CD8-positive, alpha-beta memory T cell (primary cell): ENCODE measurements at regions of chr17 and their contacts with region 1.

Region 1: GRCh38 chr17:56833809-56834379 is at the starts of genes C17orf67 and DGKE:
- DNase-seq: peak; percentile 98 to 100 (median 98)
- H3K4me3 ChIP-seq: peak within 1 kb of the TSS; percentile 84
- H3K4me3 Mint-ChIP-seq: peak within 1 kb of the TSS; percentile 95 to 100 (median 96)
- H3K27ac ChIP-seq: peak within 1 kb of the TSS; percentile 80
- H3K27ac Mint-ChIP-seq: peak within 1 kb of the TSS; percentile 91 to 98 (median 94)
- H3K4me1 ChIP-seq: peaks cover 53% of the 10 kb centered on the region
- H3K4me1 Mint-ChIP-seq: peaks cover 51 to 71% (median 67%) of the 10 kb centered on the region in 3 donors
- H3K27me3 ChIP-seq: no peaks in the 10 kb centered on the region
- H3K27me3 Mint-ChIP-seq: no peaks in the 10 kb centered on the region
- total RNA-seq, gene C17orf67: 3.2 to 4.6 TPM
- total RNA-seq, gene DGKE: 26.7 to 30.5 TPM

Region 2: GRCh38 chr17:56819431-56820145 is 14.3 kb before region 1 on chr17:
- CTCF ChIA-PET with region 1: interaction called, 42 read pairs
- POLR2A ChIA-PET with region 1: interaction called, 10 read pairs
- DNase-seq: peak; percentile 46 to 78 (median 58)
- H3K4me3 ChIP-seq: no peak overlapping the region
- H3K4me3 Mint-ChIP-seq: no peak overlapping the region
- H3K27ac ChIP-seq: no peak overlapping the region
- H3K27ac Mint-ChIP-seq: peak overlapping the region in 1 of 8 donors; percentile 19
- H3K4me1 ChIP-seq: no peaks in the 10 kb centered on the region
- H3K4me1 Mint-ChIP-seq: peaks cover 5 to 6% (median 5%) of the 10 kb centered on the region in 3 donors
- H3K27me3 ChIP-seq: no peaks in the 10 kb centered on the region
- H3K27me3 Mint-ChIP-seq: no peaks in the 10 kb centered on the region

Region 3: DNA sequence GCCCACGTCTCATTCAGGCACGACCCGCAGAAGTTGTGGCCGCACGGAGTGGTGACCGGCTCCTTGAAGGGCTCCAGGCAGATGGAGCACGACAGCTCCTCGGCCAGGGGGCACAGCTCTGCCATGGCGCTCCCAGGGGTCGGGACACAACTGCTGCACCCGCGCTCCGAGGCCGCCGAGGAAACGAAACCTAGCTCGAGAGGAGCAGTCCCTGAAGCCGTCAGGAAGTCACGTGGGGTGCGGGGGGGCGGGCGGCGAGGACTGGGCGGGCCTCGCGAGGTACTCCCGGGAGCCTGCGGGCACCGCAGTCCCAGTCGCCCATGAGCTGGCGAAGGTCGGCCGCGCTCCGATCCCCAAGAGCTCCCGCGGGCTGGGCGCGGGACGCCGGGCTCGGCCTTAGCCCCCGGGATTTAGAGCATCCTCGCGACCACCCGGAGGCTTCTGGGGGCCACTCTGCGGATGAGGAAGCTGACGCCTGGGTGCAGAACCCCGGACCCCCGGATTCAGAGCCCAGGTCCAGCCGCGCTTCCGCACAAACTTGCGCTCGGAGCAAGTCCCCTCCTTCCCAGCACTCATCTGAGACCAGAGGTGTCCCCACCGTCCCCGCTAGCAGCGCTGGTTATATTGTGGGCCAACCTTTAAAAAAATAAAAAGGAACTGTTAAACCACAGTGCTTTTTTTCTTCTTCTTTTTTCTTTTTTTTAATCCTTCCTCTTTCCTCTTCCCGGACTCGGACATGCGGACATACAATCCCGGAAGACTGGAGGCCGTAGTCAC is 80.2 kb after region 1 on chr17 and contains the start of gene TRIM25:
- CTCF ChIA-PET with region 1: interaction called, 8 read pairs
- POLR2A ChIA-PET with region 1: interaction called, 27 read pairs
- DNase-seq: peak; percentile 77 to 90 (median 84)
- H3K4me3 ChIP-seq: peak within 1 kb of the TSS; percentile 92
- H3K4me3 Mint-ChIP-seq: peak within 1 kb of the TSS; percentile 89 to 97 (median 95)
- H3K27ac ChIP-seq: peak within 1 kb of the TSS; percentile 76
- H3K27ac Mint-ChIP-seq: peak within 1 kb of the TSS; percentile 90 to 98 (median 95)
- H3K4me1 ChIP-seq: peaks cover 40% of the 10 kb centered on the region
- H3K4me1 Mint-ChIP-seq: peaks cover 38 to 47% (median 46%) of the 10 kb centered on the region in 3 donors
- H3K27me3 ChIP-seq: no peaks in the 10 kb centered on the region
- H3K27me3 Mint-ChIP-seq: no peaks in the 10 kb centered on the region
- total RNA-seq, gene TRIM25: 47.6 to 49.2 TPM